CD4-positive, alpha-beta T cell (primary cell): ENCODE measurements at regions of chr5 and their contacts with region 1.

Region 1: DNA sequence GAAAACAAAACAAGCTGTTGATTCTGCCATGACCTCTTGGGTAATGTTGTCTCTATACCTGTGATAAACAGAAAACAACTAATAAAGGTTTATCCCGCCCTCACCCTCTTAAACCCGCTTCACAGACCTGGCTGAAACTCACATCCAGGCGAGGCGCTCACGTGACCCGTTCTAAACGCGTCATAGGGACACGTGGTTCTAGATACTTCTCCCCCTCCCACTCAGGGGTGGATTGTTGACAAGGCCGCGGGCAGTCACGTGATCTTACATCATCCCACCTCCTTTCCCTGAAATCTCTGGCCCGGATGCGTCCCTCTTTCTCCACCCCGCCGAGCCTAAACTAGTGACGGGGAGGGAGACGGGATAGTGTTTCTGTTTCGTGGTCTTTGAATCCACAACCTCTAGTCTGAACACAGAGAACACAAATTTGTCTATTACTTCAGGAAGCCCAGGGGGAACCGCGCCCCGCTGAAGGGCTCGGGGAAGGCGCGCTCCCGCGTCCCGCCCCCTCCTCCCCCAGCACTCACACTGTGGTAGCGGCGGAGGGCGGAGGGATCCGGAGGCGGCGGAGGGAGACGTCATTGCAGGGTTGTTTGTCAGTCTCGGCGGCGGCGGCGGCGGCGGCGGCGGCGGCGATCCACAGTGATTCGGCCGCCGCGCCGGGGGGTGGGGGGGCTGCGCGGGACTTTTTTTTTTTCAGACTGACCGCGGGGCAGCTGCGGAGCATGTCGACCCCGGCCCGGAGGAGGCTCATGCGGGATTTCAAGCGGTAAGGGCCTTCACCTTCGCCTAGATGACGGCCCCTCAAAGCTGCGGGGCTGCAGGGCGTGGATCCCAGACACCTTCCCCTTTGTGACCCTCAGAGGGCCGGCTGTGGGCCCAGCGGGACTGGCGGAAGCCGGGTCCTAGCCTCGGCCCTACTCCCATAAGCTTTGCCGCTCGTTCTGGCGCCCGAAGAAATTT is at the start of gene UBE2B:
- DNase-seq: peak; percentile 93 to 99 (median 97)
- ATAC-seq: peak; percentile 73
- H3K4me3 ChIP-seq: peak within 1 kb of the TSS; percentile 100
- H3K4me3 Mint-ChIP-seq: peak within 1 kb of the TSS; percentile 96
- H3K27ac ChIP-seq: peak within 1 kb of the TSS; percentile 97 to 98
- H3K27ac Mint-ChIP-seq: peak within 1 kb of the TSS; percentile 97
- H3K4me1 ChIP-seq: peaks cover 37% of the 10 kb centered on the region
- H3K4me1 Mint-ChIP-seq: peaks cover 68% of the 10 kb centered on the region
- H3K27me3 ChIP-seq: no peaks in the 10 kb centered on the region
- H3K27me3 Mint-ChIP-seq: peaks cover 4% of the 10 kb centered on the region
- CTCF ChIP-seq: no peak
- total RNA-seq, gene UBE2B: 225 to 228 TPM

Region 2: DNA sequence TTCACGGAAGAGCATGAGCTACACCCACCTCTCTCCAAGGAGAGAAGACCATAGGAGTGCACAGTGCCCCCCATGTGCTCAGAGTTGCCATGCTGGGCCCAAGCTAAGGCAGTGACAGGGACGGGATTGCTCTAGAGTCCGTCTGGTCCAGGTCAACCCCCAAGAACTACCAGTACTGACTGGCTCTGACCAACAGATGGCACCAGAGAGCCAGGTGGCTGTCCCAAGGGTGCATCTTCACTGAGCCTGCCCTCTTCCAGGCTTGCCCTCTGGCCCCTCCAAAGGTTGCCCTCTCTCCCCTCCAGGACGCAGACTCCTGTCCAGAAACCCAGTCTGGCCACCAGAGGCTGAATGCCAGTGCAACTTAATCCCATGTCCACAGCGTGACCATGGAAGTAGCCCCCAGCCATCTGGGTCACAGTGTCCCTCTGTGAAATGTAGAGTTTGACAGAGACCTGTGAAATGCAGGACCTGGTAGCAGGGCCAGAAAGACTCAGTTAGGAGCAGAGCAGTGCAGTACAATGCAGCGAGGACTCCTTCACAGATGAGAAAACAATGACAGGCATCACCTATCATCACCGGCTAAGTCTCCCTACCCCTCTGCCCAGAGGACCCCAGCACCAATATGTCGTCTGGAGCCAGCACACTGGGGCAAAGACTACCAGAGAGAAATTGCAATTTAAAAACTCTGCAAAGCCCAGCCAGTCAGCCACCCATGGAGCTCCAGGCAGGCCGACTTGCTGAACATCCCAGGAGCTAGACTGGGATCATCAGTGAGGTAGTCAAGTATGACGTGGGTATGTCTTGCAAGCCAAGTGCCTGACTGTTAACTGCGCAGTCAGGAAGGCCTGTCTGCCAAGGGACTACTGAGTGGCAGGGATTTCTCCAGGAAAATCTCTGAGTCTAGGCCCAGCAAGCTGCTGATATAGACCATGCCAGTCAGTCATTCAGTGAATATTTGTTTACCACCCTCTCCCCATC is 186.7 kb before region 1 on chr5:
- CTCF ChIA-PET with region 1: no interaction called
- POLR2A ChIA-PET with region 1: no interaction called
- intact Hi-C with region 1: loop called in 1 of 2 experiments (anchors 10 kb)
- DNase-seq: peak; percentile 65 to 87 (median 71)
- ATAC-seq: peak; percentile 98
- H3K4me3 ChIP-seq: no peak overlapping the region
- H3K4me3 Mint-ChIP-seq: no peak overlapping the region
- H3K27ac ChIP-seq: no peak overlapping the region
- H3K27ac Mint-ChIP-seq: no peak overlapping the region
- H3K4me1 ChIP-seq: peaks cover 6% of the 10 kb centered on the region
- H3K4me1 Mint-ChIP-seq: no peaks in the 10 kb centered on the region
- H3K27me3 ChIP-seq: no peaks in the 10 kb centered on the region
- H3K27me3 Mint-ChIP-seq: no peaks in the 10 kb centered on the region
- CTCF ChIP-seq: peak; percentile 91

Region 3: DNA sequence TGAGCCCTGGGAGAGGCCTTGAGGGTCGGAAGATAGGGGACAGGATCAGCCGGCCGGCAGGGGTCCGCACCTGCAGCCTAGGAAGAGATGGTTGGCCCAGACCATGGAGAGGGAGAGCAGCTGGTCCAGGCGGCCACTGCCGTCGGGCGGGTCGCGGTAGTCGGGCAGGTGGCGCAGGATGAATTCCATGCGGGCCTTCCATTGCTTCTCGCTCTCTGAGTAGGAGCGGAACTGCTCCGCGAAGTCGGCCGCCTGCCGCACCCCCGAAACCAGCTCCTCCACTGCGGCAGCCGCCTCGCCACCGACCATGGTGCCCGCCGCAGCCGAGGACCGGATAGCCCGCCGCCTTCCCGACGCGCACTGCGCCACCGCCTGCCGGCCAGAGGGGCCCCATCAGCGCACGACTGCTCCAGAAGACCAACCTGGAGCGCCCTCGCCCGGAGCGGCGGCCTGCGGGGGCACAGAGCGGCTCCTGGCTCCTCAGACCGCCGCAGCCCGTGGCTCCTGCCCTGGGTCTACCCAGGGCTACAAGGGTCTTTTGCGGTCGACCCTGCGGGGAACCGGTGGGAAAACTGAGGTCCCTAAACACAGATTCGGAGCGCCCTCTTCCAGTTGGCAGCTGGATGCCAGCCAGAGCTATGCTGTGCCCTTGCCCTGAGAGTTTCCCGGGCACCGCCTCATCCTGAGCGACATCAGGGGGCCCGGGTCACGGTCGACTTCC is 40.6 kb after region 1 on chr5 and contains the start of gene CDKN2AIPNL:
- CTCF ChIA-PET with region 1: interaction called, 11 read pairs
- POLR2A ChIA-PET with region 1: interaction called, 30 read pairs
- intact Hi-C with region 1: loop called (anchors 2 kb)
- DNase-seq: peak; percentile 84 to 94 (median 90)
- ATAC-seq: peak; percentile 99
- H3K4me3 ChIP-seq: peak within 1 kb of the TSS; percentile 81
- H3K4me3 Mint-ChIP-seq: peak within 1 kb of the TSS; percentile 87
- H3K27ac ChIP-seq: peak within 1 kb of the TSS; percentile 53 to 64
- H3K27ac Mint-ChIP-seq: peak within 1 kb of the TSS; percentile 81
- H3K4me1 ChIP-seq: peaks cover 25% of the 10 kb centered on the region
- H3K4me1 Mint-ChIP-seq: peaks cover 42% of the 10 kb centered on the region
- H3K27me3 ChIP-seq: no peaks in the 10 kb centered on the region
- H3K27me3 Mint-ChIP-seq: no peaks in the 10 kb centered on the region
- CTCF ChIP-seq: peak; percentile 79
- total RNA-seq, gene CDKN2AIPNL: 12.8 to 15.5 TPM

Region 4: DNA sequence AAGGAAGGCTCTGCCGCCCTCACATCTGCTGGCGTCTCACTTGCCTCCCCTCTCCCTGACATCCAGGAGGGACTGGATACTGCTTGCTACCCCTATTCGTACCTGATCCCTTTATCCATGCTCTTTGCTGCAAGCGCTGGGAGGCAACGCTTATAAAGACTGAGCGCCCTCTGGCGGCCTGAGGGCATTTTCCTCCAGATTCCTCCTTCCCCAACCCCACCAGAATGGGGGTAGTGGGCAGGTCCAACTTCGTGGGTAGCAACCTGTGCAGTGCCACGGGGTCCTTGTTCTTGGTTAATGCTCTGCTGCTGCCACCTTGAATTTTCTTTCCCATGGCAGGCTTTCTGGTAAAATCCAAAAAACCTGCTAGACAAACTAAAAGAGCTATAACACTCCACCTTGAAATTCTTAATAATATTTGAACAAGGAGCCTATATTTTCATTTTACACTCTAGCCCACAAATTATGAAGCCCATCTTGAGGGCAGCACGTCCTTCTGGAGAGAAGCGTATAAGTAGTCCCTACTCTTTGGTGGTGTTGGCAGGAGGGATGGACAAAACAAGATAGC is 206.7 kb after region 1 on chr5:
- CTCF ChIA-PET with region 1: no interaction called
- POLR2A ChIA-PET with region 1: interaction called, 3 read pairs
- intact Hi-C with region 1: loop called (anchors 2 to 5 kb)
- DNase-seq: peak; percentile 63 to 86 (median 72)
- ATAC-seq: peak; percentile 85
- H3K4me3 ChIP-seq: no peak overlapping the region
- H3K4me3 Mint-ChIP-seq: no peak overlapping the region
- H3K27ac ChIP-seq: no peak overlapping the region
- H3K27ac Mint-ChIP-seq: peak overlapping the region; percentile 82
- H3K4me1 ChIP-seq: peaks cover 9% of the 10 kb centered on the region
- H3K4me1 Mint-ChIP-seq: peaks cover 7% of the 10 kb centered on the region
- H3K27me3 ChIP-seq: no peaks in the 10 kb centered on the region
- H3K27me3 Mint-ChIP-seq: no peaks in the 10 kb centered on the region
- CTCF ChIP-seq: peak; percentile 91

Region 5: GRCh38 chr5:134845852-134846640 is 474.9 kb after region 1 on chr5 and contains the start of gene C5orf24:
- CTCF ChIA-PET with region 1: no interaction called
- POLR2A ChIA-PET with region 1: no interaction called
- intact Hi-C with region 1: loop called in 1 of 2 experiments (anchors 5 kb)
- DNase-seq: peak; percentile 83 to 98 (median 90)
- ATAC-seq: peak; percentile 90
- H3K4me3 ChIP-seq: peak within 1 kb of the TSS; percentile 76
- H3K4me3 Mint-ChIP-seq: peak within 1 kb of the TSS; percentile 86
- H3K27ac ChIP-seq: peak within 1 kb of the TSS; percentile 87
- H3K27ac Mint-ChIP-seq: peak within 1 kb of the TSS; percentile 95
- H3K4me1 ChIP-seq: peaks cover 35% of the 10 kb centered on the region
- H3K4me1 Mint-ChIP-seq: peaks cover 26% of the 10 kb centered on the region
- H3K27me3 ChIP-seq: no peaks in the 10 kb centered on the region
- H3K27me3 Mint-ChIP-seq: no peaks in the 10 kb centered on the region
- CTCF ChIP-seq: no peak
- total RNA-seq, gene C5orf24: 34.6 to 36.5 TPM